Activated CD8-positive, alpha-beta T cell treated with anti-CD3 and anti-CD28 coated beads, Interleukin-2, amount 10 ng/mL, durations not matched to agents 7 days and 5 days (primary cell): ENCODE measurements at regions of chr15 and their contacts with region 1.

Region 1: GRCh38 chr15:65384895-65385858 is 7.4 kb upstream of the IGDCC3 start:
- DNase-seq: peak; percentile 89
- ATAC-seq: peak; percentile 88
- H3K4me3 Mint-ChIP-seq: peak overlapping the region; percentile 79
- H3K27ac Mint-ChIP-seq: peak overlapping the region; percentile 72
- H3K4me1 Mint-ChIP-seq: peaks cover 14% of the 10 kb centered on the region
- H3K27me3 Mint-ChIP-seq: peaks cover 25% of the 10 kb centered on the region

Region 2: DNA sequence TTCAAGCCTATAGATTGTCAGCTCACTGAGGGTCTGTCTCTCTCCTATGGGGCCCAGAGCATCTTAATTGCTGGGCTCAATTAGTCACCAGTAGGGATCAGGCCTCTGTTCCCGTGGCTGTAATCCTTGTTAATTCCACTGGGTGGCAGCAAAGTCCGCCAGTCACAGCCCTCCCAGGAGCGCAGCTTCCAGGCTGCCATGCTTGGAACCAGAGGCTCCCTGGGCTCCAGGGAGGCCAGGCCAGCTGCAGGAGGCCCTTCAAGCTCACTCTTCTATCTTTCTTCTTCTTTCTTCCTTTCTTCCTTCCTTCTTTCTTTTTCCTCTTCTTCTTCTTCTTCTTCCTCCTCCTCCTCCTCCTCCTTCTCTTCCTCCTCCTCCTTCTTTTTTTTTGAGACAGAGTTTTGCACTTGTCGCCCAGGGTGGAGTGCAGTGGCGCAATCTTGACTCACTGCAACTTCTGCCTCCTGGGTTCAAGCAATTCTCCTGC is 66.3 kb before region 1 on chr15:
- CTCF ChIA-PET with region 1: interaction called, 78 read pairs
- POLR2A ChIA-PET with region 1: no interaction called
- DNase-seq: peak; percentile 82
- ATAC-seq: peak; percentile 99
- H3K4me3 Mint-ChIP-seq: no peak overlapping the region
- H3K27ac Mint-ChIP-seq: no peak overlapping the region
- H3K4me1 Mint-ChIP-seq: no peaks in the 10 kb centered on the region
- H3K27me3 Mint-ChIP-seq: peaks cover 14% of the 10 kb centered on the region

Region 3: GRCh38 chr15:65346856-65347598 is 38.1 kb before region 1 on chr15:
- CTCF ChIA-PET with region 1: interaction called, 10 read pairs
- POLR2A ChIA-PET with region 1: no interaction called
- DNase-seq: no peak
- ATAC-seq: no peak
- H3K4me3 Mint-ChIP-seq: no peak overlapping the region
- H3K27ac Mint-ChIP-seq: no peak overlapping the region
- H3K4me1 Mint-ChIP-seq: no peaks in the 10 kb centered on the region
- H3K27me3 Mint-ChIP-seq: peaks cover 11% of the 10 kb centered on the region

Region 4: GRCh38 chr15:65374821-65375401 is 10.3 kb before region 1 on chr15:
- CTCF ChIA-PET with region 1: interaction called, 19 read pairs
- POLR2A ChIA-PET with region 1: no interaction called
- DNase-seq: no peak
- ATAC-seq: no peak
- H3K4me3 Mint-ChIP-seq: no peak overlapping the region
- H3K27ac Mint-ChIP-seq: no peak overlapping the region
- H3K4me1 Mint-ChIP-seq: peaks cover 13% of the 10 kb centered on the region
- H3K27me3 Mint-ChIP-seq: peaks cover 50% of the 10 kb centered on the region

Region 5: DNA sequence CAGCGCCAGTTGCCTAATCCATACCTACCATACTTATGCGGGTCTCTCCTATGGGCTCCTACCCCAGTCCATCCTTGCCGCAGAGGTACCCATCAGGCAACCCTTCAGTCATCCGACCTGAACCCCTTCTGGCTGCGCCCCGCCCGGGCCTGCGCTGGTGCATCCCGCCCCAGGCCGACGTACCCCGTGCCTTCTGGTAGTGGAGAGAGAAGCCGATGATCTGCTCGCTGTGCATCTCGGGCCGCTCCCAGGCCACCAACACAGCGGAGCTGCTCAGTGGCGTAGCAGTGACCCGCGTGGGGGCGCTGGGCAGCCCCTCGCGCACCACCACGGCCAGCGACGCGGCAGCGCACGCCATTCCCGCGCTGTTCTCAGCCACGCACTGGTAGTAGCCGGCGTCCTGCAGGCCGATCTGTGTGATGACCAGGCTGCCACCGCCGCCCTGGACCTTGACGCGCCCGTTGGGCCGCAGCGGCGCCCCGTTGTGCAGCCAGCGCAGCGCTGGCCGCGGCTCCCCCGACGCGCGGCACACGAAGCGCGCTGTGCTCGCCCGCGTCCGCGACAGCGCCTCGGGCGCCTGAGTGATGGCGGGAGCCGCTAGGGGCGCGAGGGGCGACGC is 10.5 kb after region 1 on chr15:
- CTCF ChIA-PET with region 1: interaction called, 17 read pairs
- POLR2A ChIA-PET with region 1: no interaction called
- DNase-seq: no peak
- ATAC-seq: no peak
- H3K4me3 Mint-ChIP-seq: no peak overlapping the region
- H3K27ac Mint-ChIP-seq: no peak overlapping the region
- H3K4me1 Mint-ChIP-seq: peaks cover 6% of the 10 kb centered on the region
- H3K27me3 Mint-ChIP-seq: peaks cover 60% of the 10 kb centered on the region